ENCODE measurements at regions of chr5 and their contacts with region 1.

Region 1: DNA sequence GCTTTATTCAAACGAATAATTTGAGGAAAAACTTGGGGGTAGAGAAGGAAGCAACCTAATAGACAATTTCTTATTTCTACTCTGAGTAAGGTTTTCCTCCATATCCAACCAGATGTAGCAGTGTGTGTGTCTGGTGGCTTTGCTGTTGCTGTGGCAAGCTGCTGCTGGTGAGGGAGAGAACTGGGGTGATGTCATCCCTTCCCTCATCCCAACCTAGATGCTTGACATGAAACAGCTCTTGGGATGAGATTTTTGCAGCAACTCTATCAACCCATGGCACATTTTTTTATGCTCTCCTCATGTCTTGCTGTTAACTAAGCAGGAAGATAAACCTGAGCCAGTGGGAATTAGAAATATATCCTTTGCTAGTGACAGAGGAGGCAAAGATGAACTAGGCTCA is 135.8 kb downstream of the PCSK1 start:
- DNase-seq: no peak
- CTCF ChIP-seq: no peak

Region 2: GRCh38 chr5:96284727-96285389 is 12.4 kb before region 1 on chr5:
- CTCF ChIA-PET with region 1: interaction called, 11 read pairs
- POLR2A ChIA-PET with region 1: interaction called, 3 read pairs
- DNase-seq: no peak
- CTCF ChIP-seq: no peak

Region 3: DNA sequence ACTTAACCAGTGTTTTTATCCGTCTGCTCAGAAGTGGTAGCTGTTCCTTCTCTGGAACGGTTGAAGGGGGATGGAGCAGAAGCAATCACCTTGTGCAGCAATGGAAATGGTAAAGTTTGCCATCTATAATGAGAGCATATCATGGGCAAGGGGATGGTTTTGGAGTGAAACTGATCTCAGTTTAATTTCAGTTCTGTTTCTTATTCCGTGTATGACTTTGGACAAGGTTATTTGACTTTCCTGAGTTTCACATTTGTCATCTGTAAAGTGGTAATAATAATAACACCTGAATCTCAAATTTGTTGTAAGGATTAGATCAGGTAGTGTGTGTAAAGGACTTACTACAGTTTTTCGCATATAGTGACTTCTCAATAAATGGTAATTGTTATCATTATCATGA is 29.6 kb after region 1 on chr5:
- CTCF ChIA-PET with region 1: no interaction called
- POLR2A ChIA-PET with region 1: no interaction called
- DNase-seq: no peak
- CTCF ChIP-seq: no peak

Measured in GM10248 (cell line).